Activated T-helper 1 cell treated with anti-CD3 and anti-CD28 coated beads, Interleukin-12 subunit alpha, Interleukin-12 subunit beta, Interleukin-2, Interleukin-4 antibody, amounts not matched to agents 30 ng/mL and 10 ng/mL and 1 ng/mL, durations not matched to agents 14 hours and 24 hours and 36 hours (primary cell): ENCODE measurements at regions of chr6 and their contacts with region 1.

Region 1: DNA sequence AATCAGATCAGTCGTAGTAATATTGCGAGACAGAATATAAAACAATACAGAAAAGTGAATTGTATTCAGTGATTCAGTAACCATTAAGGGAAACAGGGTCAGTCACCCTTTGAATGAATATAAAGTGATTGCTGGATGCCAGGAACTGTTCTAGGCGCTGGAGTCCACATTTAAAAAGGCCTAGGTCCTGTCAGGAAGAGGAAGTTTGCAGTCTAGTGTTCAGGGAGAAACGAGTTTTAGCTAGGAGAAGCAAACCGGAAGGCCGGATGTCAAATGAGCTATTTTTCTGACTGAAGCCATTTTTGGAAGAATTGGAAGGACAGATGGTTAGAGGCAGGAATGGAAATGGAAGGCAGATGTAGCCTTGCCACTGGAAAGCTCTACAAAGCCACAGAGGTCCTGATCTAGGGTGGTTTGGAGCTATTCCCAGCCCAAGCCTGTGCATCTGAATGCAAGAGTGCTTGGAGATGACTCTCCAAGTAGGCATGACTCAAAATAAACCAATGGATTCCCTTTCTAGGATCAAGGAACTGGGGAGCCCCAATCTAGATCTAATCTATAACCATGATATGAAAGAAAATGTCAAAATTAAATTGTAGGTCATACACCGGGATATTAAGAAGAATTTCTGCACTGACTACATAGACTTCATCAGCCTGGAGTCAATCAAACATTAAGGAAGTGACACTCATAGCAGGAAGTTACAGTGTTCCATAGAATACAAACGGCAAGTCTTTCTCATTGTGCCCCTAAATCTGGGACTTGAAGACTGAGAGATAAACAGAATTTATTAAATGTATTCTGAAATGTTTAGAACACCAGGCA is 36.8 kb upstream of the CDKAL1 start:
- DNase-seq: no peak
- H3K4me3 Mint-ChIP-seq: no peak overlapping the region
- H3K27ac Mint-ChIP-seq: no peak overlapping the region
- H3K4me1 Mint-ChIP-seq: no peaks in the 10 kb centered on the region
- H3K27me3 Mint-ChIP-seq: no peaks in the 10 kb centered on the region

Region 2: DNA sequence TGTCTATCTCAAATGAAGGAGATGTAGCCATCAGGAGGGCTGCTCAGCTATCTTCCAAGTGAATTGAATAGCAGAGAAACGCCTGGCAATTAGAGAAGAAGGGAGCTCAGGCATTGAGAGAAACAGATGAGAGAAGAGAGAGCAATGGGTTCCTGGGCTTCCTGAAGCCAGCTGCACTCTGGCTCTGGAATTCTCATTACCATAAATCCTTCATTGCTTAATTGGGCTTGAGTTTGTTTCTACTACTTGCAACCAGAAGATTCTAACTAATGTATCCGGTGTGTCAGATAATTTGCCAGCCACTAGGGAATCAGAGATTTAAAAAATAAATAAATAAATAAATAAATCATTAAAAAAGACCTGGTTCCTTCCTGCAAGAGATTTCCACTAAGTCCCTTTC is 11.8 kb after region 1 on chr6:
- intact Hi-C with region 1: loop called (anchors 1 kb)
- DNase-seq: no peak
- H3K4me3 Mint-ChIP-seq: no peak overlapping the region
- H3K27ac Mint-ChIP-seq: no peak overlapping the region
- H3K4me1 Mint-ChIP-seq: no peaks in the 10 kb centered on the region
- H3K27me3 Mint-ChIP-seq: peaks cover 11% of the 10 kb centered on the region

Region 3: DNA sequence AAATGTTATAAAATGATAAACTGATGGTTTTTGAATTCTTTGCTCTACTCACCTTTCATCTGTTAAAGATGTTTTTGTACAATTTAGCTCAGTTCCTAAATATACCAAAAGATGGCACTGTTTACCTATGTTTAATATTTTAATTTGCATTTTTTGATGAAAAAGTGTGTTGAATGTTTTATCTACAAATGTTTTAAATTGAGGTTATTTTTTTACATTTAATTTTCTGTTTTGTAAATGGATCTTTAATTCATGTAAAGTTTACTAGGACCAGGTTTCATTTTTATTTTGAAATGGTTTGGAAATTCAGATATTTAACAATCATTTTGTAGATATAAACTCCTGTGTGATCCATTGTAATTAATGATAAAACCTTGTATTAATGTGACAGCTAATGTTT is 66.8 kb after region 1 on chr6:
- intact Hi-C with region 1: no loop called
- DNase-seq: no peak
- H3K4me3 Mint-ChIP-seq: no peak overlapping the region
- H3K27ac Mint-ChIP-seq: no peak overlapping the region
- H3K4me1 Mint-ChIP-seq: peaks cover 23% of the 10 kb centered on the region
- H3K27me3 Mint-ChIP-seq: no peaks in the 10 kb centered on the region

Region 4: GRCh38 chr6:20708367-20709124 is 211.1 kb after region 1 on chr6:
- intact Hi-C with region 1: no loop called
- DNase-seq: no peak
- H3K4me3 Mint-ChIP-seq: no peak overlapping the region
- H3K27ac Mint-ChIP-seq: peak overlapping the region; percentile 75
- H3K4me1 Mint-ChIP-seq: peaks cover 43% of the 10 kb centered on the region
- H3K27me3 Mint-ChIP-seq: no peaks in the 10 kb centered on the region

Region 5: GRCh38 chr6:20939161-20939775 is 441.8 kb after region 1 on chr6:
- intact Hi-C with region 1: no loop called
- DNase-seq: no peak
- H3K4me3 Mint-ChIP-seq: no peak overlapping the region
- H3K27ac Mint-ChIP-seq: no peak overlapping the region
- H3K4me1 Mint-ChIP-seq: peaks cover 6% of the 10 kb centered on the region
- H3K27me3 Mint-ChIP-seq: no peaks in the 10 kb centered on the region